ENCODE measurements at regions of chr19 and their contacts with region 1.

Region 1: DNA sequence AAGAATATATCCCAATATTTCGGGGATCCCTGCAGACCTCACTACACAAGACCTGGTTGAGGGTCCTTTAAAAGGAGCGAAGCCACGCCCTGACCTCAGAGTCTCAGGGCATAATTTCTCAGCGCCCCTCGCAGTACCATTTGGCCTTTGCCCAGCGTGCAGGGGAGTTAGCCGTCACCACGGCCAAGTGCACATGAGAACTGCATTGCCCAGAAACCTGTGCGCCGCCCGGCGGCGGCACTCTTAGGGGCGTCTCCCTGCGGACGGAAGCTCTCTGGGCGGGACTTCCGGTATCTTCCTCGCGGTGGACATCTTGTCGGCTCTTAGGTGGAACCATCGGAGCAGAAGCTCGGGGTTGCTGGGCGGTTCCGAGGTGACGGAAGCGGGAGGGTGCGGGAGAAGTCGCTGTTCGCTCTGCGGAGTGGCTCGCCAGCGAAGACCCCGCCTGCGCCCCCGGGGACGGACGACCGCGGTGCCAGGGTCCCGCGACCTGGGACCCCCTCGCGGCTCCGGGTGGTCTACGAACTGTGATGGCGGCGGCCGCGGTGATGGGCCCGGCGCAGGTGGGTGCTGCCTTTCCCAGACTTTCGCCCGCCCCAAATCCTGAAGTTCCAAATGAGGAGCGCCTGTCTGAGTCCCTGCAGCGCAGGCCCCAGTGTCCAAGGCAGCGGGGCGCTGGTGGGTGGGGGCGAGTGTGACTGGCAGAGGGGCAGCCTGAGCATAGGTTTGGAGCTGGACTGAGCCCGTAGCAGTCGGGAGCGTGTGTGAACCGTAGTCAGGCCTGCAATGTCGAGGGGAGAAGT is at the start of gene ZNF134:
- DNase-seq: peak; percentile 84
- H3K4me3 Mint-ChIP-seq: peak within 1 kb of the TSS; percentile 90
- H3K27ac Mint-ChIP-seq: peak within 1 kb of the TSS; percentile 78
- H3K4me1 Mint-ChIP-seq: peaks cover 11% of the 10 kb centered on the region
- H3K27me3 Mint-ChIP-seq: no peaks in the 10 kb centered on the region
- total RNA-seq, gene ZNF134: 8.4 and 9.4 TPM in 2 replicates

Region 2: GRCh38 chr19:57334191-57334590 is 280.0 kb before region 1 on chr19:
- intact Hi-C with region 1: no loop called
- DNase-seq: no peak
- H3K4me3 Mint-ChIP-seq: no peak overlapping the region
- H3K27ac Mint-ChIP-seq: no peak overlapping the region
- H3K4me1 Mint-ChIP-seq: no peaks in the 10 kb centered on the region
- H3K27me3 Mint-ChIP-seq: no peaks in the 10 kb centered on the region

Region 3: GRCh38 chr19:57506162-57506561 is 108.0 kb before region 1 on chr19:
- intact Hi-C with region 1: no loop called
- DNase-seq: no peak
- H3K4me3 Mint-ChIP-seq: no peak overlapping the region
- H3K27ac Mint-ChIP-seq: no peak overlapping the region
- H3K4me1 Mint-ChIP-seq: peaks cover 7% of the 10 kb centered on the region
- H3K27me3 Mint-ChIP-seq: no peaks in the 10 kb centered on the region

Region 4: DNA sequence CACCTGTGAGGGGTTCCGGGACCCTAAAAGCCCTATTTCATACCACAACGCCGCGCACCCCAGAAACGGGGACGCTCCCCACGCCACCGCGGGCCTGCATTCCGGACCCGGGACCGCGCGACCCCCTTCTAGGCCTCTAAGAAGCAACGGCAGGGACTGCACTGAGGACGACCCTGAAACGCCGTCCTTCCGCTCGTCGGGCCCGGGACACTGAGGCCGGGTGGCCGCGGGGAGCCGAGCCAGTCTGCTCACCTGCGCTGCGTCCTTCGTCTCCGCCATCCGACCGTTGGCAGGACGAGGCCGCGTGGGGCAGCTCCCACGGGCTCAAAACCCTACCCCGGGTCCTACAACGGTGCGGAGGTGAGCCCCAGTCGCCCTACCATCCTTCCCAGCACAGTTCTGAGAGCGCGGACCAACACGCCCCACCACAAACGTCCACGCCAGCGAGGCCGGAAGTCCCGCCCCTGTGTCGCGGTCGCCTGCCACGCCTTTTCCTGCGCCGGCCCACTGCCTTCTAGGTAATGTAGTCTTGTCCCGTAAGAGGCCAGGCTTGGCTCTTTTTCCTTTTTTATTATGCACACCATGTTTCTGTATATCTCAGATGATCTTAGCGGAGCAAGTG is 54.6 kb before region 1 on chr19 and contains the start of gene ZNF550:
- intact Hi-C with region 1: loop called (anchors 1 kb)
- DNase-seq: peak; percentile 84
- H3K4me3 Mint-ChIP-seq: peak within 1 kb of the TSS; percentile 98
- H3K27ac Mint-ChIP-seq: peak within 1 kb of the TSS; percentile 88
- H3K4me1 Mint-ChIP-seq: peaks cover 28% of the 10 kb centered on the region
- H3K27me3 Mint-ChIP-seq: no peaks in the 10 kb centered on the region
- total RNA-seq, gene ZNF550: 7.2 and 7.5 TPM in 2 replicates

Region 5: GRCh38 chr19:57587529-57587928 is 26.6 kb before region 1 on chr19:
- intact Hi-C with region 1: no loop called
- DNase-seq: no peak
- H3K4me3 Mint-ChIP-seq: no peak overlapping the region
- H3K27ac Mint-ChIP-seq: no peak overlapping the region
- H3K4me1 Mint-ChIP-seq: peaks cover 16% of the 10 kb centered on the region
- H3K27me3 Mint-ChIP-seq: no peaks in the 10 kb centered on the region

Region 6: GRCh38 chr19:57599761-57600383 is 14.3 kb before region 1 on chr19 and contains the start of gene ZNF530:
- intact Hi-C with region 1: loop called (anchors 1 kb)
- DNase-seq: peak; percentile 78
- H3K4me3 Mint-ChIP-seq: peak within 1 kb of the TSS; percentile 85
- H3K27ac Mint-ChIP-seq: peak within 1 kb of the TSS; percentile 58
- H3K4me1 Mint-ChIP-seq: peaks cover 16% of the 10 kb centered on the region
- H3K27me3 Mint-ChIP-seq: no peaks in the 10 kb centered on the region
- total RNA-seq, gene ZNF530: 5.4 and 7.3 TPM in 2 replicates

Region 7: GRCh38 chr19:57769345-57770131 is 155.4 kb after region 1 on chr19 and contains the start of gene ZNF586:
- intact Hi-C with region 1: loop called (anchors 1 kb)
- DNase-seq: peak; percentile 85
- H3K4me3 Mint-ChIP-seq: peak within 1 kb of the TSS; percentile 94
- H3K27ac Mint-ChIP-seq: peak within 1 kb of the TSS; percentile 89
- H3K4me1 Mint-ChIP-seq: peaks cover 24% of the 10 kb centered on the region
- H3K27me3 Mint-ChIP-seq: no peaks in the 10 kb centered on the region
- total RNA-seq, gene ZNF586: 13.6 and 13.8 TPM in 2 replicates

Region 8: GRCh38 chr19:58154679-58155648 is 540.8 kb after region 1 on chr19:
- intact Hi-C with region 1: loop called (anchors 10 kb)
- DNase-seq: peak; percentile 89
- H3K4me3 Mint-ChIP-seq: peak overlapping the region; percentile 76
- H3K27ac Mint-ChIP-seq: peak overlapping the region; percentile 55
- H3K4me1 Mint-ChIP-seq: peaks cover 4% of the 10 kb centered on the region
- H3K27me3 Mint-ChIP-seq: no peaks in the 10 kb centered on the region

Measured in activated T-helper 1 cell treated with anti-CD3 and anti-CD28 coated beads, Interleukin-12 subunit alpha, Interleukin-12 subunit beta, Interleukin-2, Interleukin-4 antibody, amounts not matched to agents 30 ng/mL and 10 ng/mL and 1 ng/mL, durations not matched to agents 14 hours and 24 hours and 36 hours (primary cell).